ENCODE measurements at regions of chr7 and their contacts with region 1.

Region 1: DNA sequence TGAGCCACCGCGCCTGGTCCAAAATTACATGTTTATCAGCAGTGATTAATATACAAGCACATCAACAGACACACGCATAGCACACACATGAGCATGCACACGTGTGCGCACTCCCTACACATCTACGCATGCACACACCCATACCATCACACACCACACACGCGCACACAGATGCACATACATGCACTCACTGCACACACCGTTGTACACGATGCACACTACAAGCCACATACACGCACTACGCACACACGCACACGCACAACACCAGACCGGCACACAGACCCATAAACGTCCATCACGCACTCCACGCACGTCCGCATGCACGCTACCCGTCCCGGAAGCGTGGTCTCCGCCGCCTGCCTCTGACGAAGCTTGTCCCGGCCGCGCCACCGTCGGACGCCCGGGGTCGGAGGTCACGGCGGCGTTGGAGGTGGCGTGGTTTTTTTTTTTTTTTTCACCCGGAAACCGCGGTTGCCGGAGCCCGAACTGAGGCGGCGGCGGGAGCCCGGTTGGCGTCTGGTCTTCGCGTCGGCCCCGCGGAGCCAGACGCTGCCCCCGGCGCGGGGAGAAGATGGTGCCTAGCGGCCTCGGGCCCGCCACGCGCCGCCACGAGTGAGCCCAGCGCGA is at the start of gene TMEM248:
- DNase-seq: peak; percentile 87 to 97 (median 94)
- ATAC-seq: peak; percentile 95
- H3K4me3 ChIP-seq: peak within 1 kb of the TSS; percentile 80
- H3K4me3 Mint-ChIP-seq: peak within 1 kb of the TSS; percentile 91 to 100 (median 98)
- H3K27ac ChIP-seq: peak within 1 kb of the TSS; percentile 93
- H3K27ac Mint-ChIP-seq: peak within 1 kb of the TSS; percentile 96 to 100 (median 98)
- H3K4me1 ChIP-seq: peaks cover 18 to 20% of the 10 kb centered on the region in 2 donors
- H3K4me1 Mint-ChIP-seq: peaks cover 14 to 49% (median 37%) of the 10 kb centered on the region in 7 donors
- H3K27me3 ChIP-seq: no peaks in the 10 kb centered on the region
- H3K27me3 Mint-ChIP-seq: no peaks in the 10 kb centered on the region
- total RNA-seq, gene TMEM248: 81.0 to 107 (median 91.6) TPM

Region 2: GRCh38 chr7:65006094-65006992 is 1914.5 kb before region 1 on chr7 and contains the start of gene ERV3-1:
- CTCF ChIA-PET with region 1: no interaction called
- POLR2A ChIA-PET with region 1: no interaction called
- intact Hi-C with region 1: loop called in 1 of 2 experiments (anchors 5 kb)
- DNase-seq: peak; percentile 76 to 96 (median 93)
- ATAC-seq: peak; percentile 99
- H3K4me3 ChIP-seq: peak within 1 kb of the TSS; percentile 72
- H3K4me3 Mint-ChIP-seq: peak within 1 kb of the TSS; percentile 75 to 96 (median 94)
- H3K27ac ChIP-seq: peak within 1 kb of the TSS; percentile 81
- H3K27ac Mint-ChIP-seq: peak within 1 kb of the TSS; percentile 73 to 98 (median 94)
- H3K4me1 ChIP-seq: peaks cover 4 to 21% of the 10 kb centered on the region in 2 donors
- H3K4me1 Mint-ChIP-seq: peaks cover 26 to 57% (median 45%) of the 10 kb centered on the region in 7 donors
- H3K27me3 ChIP-seq: no peaks in the 10 kb centered on the region
- H3K27me3 Mint-ChIP-seq: no peaks in the 10 kb centered on the region
- total RNA-seq, gene ERV3-1: 12.2 to 22.9 (median 14.9) TPM

Region 3: DNA sequence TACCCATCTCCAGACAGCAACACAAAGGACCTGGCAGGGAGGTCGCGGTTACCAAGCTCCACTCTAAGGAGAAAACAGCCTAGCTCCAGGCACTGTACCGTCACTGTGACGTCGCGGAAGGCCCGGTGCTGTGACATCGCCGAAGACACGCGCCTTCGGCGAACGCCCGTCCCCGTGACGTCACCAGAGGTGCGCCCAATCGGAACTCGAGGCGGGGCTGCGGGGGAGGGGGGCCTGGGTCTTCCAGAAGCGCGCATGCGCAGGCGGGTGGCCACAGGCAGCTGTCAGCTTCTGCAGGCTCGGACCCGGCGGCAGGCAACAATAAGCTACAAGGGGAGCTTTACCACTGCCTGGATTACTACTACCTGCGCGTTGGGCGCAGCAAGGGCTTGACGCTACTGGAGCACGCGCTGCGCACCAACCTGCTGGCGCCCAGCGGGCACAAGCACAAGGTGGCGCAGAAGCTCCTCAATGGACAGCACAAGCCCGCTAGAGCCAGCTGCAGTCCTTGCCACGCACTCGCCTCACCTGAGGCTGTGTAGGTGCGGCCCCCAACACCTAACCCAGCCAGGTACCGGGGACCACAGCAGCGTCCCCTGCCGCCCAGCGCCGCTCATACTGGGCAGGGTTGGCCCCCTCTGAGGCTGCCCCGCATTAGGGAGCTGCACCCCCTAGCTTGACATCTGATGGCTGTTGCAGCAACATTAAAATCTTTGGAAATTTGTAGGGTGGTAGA is 507.3 kb before region 1 on chr7:
- CTCF ChIA-PET with region 1: no interaction called
- POLR2A ChIA-PET with region 1: no interaction called
- intact Hi-C with region 1: loop called in 1 of 2 experiments (anchors 1 kb)
- DNase-seq: peak; percentile 78 to 92 (median 82)
- ATAC-seq: peak; percentile 94
- H3K4me3 ChIP-seq: peak overlapping the region; percentile 74
- H3K4me3 Mint-ChIP-seq: peak overlapping the region; percentile 63 to 82 (median 80)
- H3K27ac ChIP-seq: peak overlapping the region; percentile 37
- H3K27ac Mint-ChIP-seq: peak overlapping the region; percentile 38 to 95 (median 90)
- H3K4me1 ChIP-seq: peaks cover 0 to 6% of the 10 kb centered on the region in 2 donors
- H3K4me1 Mint-ChIP-seq: peaks cover 0 to 22% (median 10%) of the 10 kb centered on the region in 7 donors
- H3K27me3 ChIP-seq: no peaks in the 10 kb centered on the region
- H3K27me3 Mint-ChIP-seq: no peaks in the 10 kb centered on the region

Region 4: GRCh38 chr7:66628361-66629140 is 292.3 kb before region 1 on chr7 and contains the start of gene KCTD7:
- CTCF ChIA-PET with region 1: no interaction called
- POLR2A ChIA-PET with region 1: interaction called, 3 read pairs
- intact Hi-C with region 1: loop called (anchors 2 kb)
- DNase-seq: peak; percentile 89 to 95 (median 92)
- ATAC-seq: peak; percentile 93
- H3K4me3 ChIP-seq: peak within 1 kb of the TSS; percentile 98
- H3K4me3 Mint-ChIP-seq: peak within 1 kb of the TSS; percentile 82 to 92 (median 89)
- H3K27ac ChIP-seq: peak within 1 kb of the TSS; percentile 91
- H3K27ac Mint-ChIP-seq: peak within 1 kb of the TSS; percentile 65 to 92 (median 89)
- H3K4me1 ChIP-seq: peaks cover 31 to 34% of the 10 kb centered on the region in 2 donors
- H3K4me1 Mint-ChIP-seq: peaks cover 37 to 51% (median 47%) of the 10 kb centered on the region in 7 donors
- H3K27me3 ChIP-seq: no peaks in the 10 kb centered on the region
- H3K27me3 Mint-ChIP-seq: peaks cover 0 to 4% (median 0%) of the 10 kb centered on the region in 5 donors
- total RNA-seq, gene KCTD7: 22.9 to 43.6 (median 33.8) TPM

Region 5: DNA sequence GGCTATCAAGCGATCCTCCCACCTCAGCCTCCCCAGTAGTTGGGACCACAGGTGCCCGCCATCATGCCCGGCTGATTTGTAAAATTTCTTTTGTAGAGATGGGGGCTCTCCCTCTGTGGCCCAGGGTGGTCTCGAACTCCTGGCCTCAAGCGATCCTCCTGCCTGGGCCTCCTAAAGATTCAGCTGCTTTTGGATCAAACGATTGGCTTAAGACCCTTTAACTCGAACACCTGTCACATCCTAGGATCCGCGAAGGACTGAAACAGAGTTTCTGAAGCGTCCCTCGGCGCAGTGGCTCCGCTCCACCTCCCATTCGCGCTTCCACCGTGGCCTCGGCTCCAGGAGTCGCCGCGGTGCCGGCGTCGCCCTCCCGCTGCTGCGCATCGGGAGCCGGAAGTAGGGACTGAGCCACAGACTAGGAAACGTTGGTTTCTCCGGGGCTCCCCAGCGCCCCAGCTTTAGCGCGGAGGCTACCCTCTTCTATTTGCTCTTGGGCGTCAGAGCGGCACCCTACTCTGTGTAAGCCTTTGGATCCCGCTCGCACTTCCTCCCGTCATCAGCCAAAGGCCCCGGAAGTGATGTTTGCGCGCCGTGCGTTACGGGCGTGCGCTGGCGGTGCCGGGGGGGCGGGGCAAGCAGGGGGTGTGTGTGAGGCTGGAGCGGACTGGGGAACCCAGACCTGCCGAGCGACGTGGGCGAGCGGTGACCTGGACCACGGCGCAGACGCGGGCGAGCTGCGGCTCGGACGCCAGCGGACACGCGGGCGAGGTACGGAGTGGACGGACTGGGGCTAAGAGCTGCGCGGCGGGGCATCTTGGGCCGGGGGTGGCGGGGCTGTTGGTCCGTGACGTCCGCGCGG is 239.2 kb before region 1 on chr7:
- CTCF ChIA-PET with region 1: no interaction called
- POLR2A ChIA-PET with region 1: interaction called, 3 read pairs
- intact Hi-C with region 1: loop called (anchors 1 to 2 kb)
- DNase-seq: peak; percentile 92 to 97 (median 95)
- ATAC-seq: peak; percentile 98
- H3K4me3 ChIP-seq: peak overlapping the region; percentile 96
- H3K4me3 Mint-ChIP-seq: peak overlapping the region; percentile 82 to 96 (median 92)
- H3K27ac ChIP-seq: peak overlapping the region; percentile 95
- H3K27ac Mint-ChIP-seq: peak overlapping the region; percentile 86 to 98 (median 97)
- H3K4me1 ChIP-seq: peaks cover 5 to 11% of the 10 kb centered on the region in 2 donors
- H3K4me1 Mint-ChIP-seq: peaks cover 7 to 59% (median 31%) of the 10 kb centered on the region in 7 donors
- H3K27me3 ChIP-seq: no peaks in the 10 kb centered on the region
- H3K27me3 Mint-ChIP-seq: no peaks in the 10 kb centered on the region

Region 6: GRCh38 chr7:66844552-66845378 is 76.1 kb before region 1 on chr7:
- CTCF ChIA-PET with region 1: interaction called, 7 read pairs
- POLR2A ChIA-PET with region 1: interaction called, 35 read pairs
- intact Hi-C with region 1: loop called (anchors 1 kb)
- DNase-seq: peak; percentile 96 to 100 (median 100)
- ATAC-seq: peak; percentile 95
- H3K4me3 ChIP-seq: peak overlapping the region; percentile 99
- H3K4me3 Mint-ChIP-seq: peak overlapping the region; percentile 88 to 100 (median 96)
- H3K27ac ChIP-seq: peak overlapping the region; percentile 90
- H3K27ac Mint-ChIP-seq: peak overlapping the region; percentile 98 to 100 (median 100)
- H3K4me1 ChIP-seq: peaks cover 5 to 11% of the 10 kb centered on the region in 2 donors
- H3K4me1 Mint-ChIP-seq: peaks cover 10 to 29% (median 26%) of the 10 kb centered on the region in 7 donors
- H3K27me3 ChIP-seq: no peaks in the 10 kb centered on the region
- H3K27me3 Mint-ChIP-seq: peaks cover 0 to 3% (median 0%) of the 10 kb centered on the region in 5 donors

Region 7: GRCh38 chr7:67302113-67303039 is 381.5 kb after region 1 on chr7:
- CTCF ChIA-PET with region 1: no interaction called
- POLR2A ChIA-PET with region 1: interaction called, 7 read pairs
- intact Hi-C with region 1: loop called (anchors 2 to 5 kb)
- DNase-seq: peak; percentile 90 to 97 (median 95)
- ATAC-seq: peak; percentile 89
- H3K4me3 ChIP-seq: peak overlapping the region; percentile 74
- H3K4me3 Mint-ChIP-seq: peak overlapping the region; percentile 89 to 99 (median 96)
- H3K27ac ChIP-seq: peak overlapping the region; percentile 88
- H3K27ac Mint-ChIP-seq: peak overlapping the region; percentile 87 to 99 (median 98)
- H3K4me1 ChIP-seq: peaks cover 3 to 7% of the 10 kb centered on the region in 2 donors
- H3K4me1 Mint-ChIP-seq: peaks cover 10 to 36% (median 25%) of the 10 kb centered on the region in 7 donors
- H3K27me3 ChIP-seq: no peaks in the 10 kb centered on the region
- H3K27me3 Mint-ChIP-seq: no peaks in the 10 kb centered on the region

Measured in naive thymus-derived CD4-positive, alpha-beta T cell (primary cell).